B cell (primary cell): ENCODE measurements at regions of chr16 and their contacts with region 1.

Region 1: DNA sequence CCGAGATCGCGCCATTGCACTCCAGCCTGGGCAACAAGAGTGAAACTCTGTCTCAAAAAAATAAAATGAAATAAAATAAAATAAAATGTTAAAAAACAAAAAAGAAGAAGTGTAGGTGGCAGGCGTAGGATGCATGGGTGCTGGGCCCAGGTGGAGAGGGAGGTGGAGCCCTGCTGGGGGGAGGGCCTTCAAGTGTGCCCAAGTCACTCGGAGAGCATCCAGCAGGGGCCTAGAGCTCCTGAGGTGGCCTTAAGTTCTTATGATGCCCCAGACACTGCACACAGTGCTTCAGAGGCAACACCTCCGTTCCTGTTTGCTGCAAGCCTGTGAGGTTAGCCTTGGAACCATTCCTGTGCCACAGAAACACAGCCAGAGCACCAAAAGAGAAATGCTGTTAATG is 23.2 kb downstream of the IL4R start:
- DNase-seq: no peak
- ATAC-seq: peak; percentile 54
- H3K4me3 ChIP-seq: no peak overlapping the region
- H3K4me3 Mint-ChIP-seq: no peak overlapping the region
- H3K27ac ChIP-seq: no peak overlapping the region
- H3K27ac Mint-ChIP-seq: peak overlapping the region; percentile 59
- H3K4me1 ChIP-seq: peaks cover 41 to 49% of the 10 kb centered on the region in 2 donors
- H3K4me1 Mint-ChIP-seq: peaks cover 51% of the 10 kb centered on the region
- H3K27me3 ChIP-seq: no peaks in the 10 kb centered on the region
- H3K27me3 Mint-ChIP-seq: no peaks in the 10 kb centered on the region
- CTCF ChIP-seq: no peak

Region 2: DNA sequence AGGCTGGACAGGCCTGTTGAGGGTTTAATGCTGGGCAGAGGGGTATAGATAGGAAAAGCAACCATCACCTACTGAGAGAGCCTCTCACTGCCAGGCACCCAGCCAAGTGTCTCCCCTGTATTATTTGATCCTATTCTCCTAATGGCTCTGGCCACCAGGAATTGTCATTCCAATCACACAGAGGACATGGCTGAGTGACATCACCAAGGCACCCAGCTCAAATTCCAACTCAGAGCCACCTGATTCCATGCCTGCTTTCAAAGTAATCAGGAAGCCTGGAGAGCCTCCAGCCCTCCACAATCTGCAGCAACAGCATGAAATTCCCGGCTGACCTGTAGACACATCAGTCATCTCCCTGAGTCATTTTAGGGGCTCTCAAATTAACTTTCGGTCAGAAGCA is 639.2 kb before region 1 on chr16:
- CTCF ChIA-PET with region 1: no interaction called
- POLR2A ChIA-PET with region 1: no interaction called
- intact Hi-C with region 1: no loop called
- DNase-seq: no peak
- ATAC-seq: no peak
- H3K4me3 ChIP-seq: no peak overlapping the region
- H3K4me3 Mint-ChIP-seq: no peak overlapping the region
- H3K27ac ChIP-seq: no peak overlapping the region
- H3K27ac Mint-ChIP-seq: no peak overlapping the region
- H3K4me1 ChIP-seq: peaks cover 3 to 5% of the 10 kb centered on the region in 2 donors
- H3K4me1 Mint-ChIP-seq: peaks cover 2% of the 10 kb centered on the region
- H3K27me3 ChIP-seq: peaks cover 0 to 22% (median 14%) of the 10 kb centered on the region in 4 experiments
- H3K27me3 Mint-ChIP-seq: peaks cover 38% of the 10 kb centered on the region
- CTCF ChIP-seq: no peak

Region 3: DNA sequence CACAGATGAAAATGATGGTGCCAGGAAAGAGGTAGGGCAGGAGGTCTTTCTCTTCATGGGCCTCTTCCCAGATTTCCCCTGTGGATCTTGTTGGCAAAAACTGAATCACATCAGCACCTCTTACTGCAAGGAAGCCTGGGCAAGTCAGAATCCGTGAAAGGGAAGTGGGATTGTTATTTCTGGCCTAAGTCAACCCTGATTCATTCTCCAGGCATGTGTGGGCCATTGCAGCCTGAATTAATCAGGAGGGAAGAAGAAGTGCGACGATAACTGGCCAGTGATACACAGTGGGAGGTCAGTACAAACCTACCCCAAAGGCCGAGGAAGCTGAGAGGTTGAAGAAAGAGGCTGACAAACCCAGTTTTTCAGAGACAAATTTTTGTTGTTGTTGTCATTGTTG is 50.6 kb before region 1 on chr16:
- CTCF ChIA-PET with region 1: no interaction called
- POLR2A ChIA-PET with region 1: no interaction called
- intact Hi-C with region 1: no loop called
- DNase-seq: no peak
- ATAC-seq: no peak
- H3K4me3 ChIP-seq: no peak overlapping the region
- H3K4me3 Mint-ChIP-seq: no peak overlapping the region
- H3K27ac ChIP-seq: peak overlapping the region in 1 of 2 donors; percentile 18
- H3K27ac Mint-ChIP-seq: peak overlapping the region; percentile 11
- H3K4me1 ChIP-seq: peaks cover 38% of the 10 kb centered on the region in 2 donors
- H3K4me1 Mint-ChIP-seq: peaks cover 49% of the 10 kb centered on the region
- H3K27me3 ChIP-seq: no peaks in the 10 kb centered on the region
- H3K27me3 Mint-ChIP-seq: no peaks in the 10 kb centered on the region
- CTCF ChIP-seq: no peak

Region 4: DNA sequence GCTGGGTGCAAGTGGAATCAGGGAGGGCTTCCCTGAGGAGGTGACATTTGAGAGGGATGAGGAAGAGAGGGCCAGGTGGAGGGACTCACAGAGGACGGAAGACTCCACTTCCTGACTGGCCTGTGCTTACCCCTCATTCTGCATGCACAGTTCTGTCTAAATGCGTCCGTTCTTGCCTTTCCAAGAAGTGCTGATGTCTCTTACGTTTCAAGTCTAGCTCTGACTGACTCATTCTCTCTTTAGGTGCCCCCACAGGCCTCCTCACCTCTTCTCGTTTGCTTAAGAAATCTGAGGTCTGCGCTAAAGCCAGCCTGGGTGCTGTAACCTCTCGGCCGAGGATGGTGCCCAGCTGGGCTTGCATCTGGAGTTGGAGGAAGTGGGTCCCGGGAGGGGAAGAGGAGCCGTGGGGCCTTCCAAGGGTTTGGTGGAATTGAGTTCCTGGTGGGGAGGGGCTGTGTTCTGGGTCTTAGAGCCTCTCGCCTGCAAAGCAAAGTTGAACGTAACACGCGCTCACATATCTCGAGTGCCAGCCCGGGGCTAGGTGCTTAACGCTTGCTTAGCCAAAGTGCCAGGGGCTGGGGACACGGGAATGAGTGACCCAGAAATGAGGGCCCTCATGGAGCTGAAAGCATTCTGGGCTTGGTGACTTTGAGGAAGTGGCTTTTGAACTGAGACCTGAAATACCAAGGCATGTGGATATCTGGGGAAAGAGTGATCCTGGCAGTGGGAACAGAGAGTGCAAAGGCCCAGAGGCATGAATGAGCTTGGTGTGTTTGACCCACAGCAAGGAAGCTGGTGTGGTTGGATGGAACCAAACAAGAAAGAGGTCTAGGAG is 18.4 kb before region 1 on chr16:
- CTCF ChIA-PET with region 1: interaction called, 4 read pairs
- POLR2A ChIA-PET with region 1: interaction called, 4 read pairs
- intact Hi-C with region 1: loop called (anchors 2 kb)
- DNase-seq: peak; percentile 39
- ATAC-seq: peak; percentile 52
- H3K4me3 ChIP-seq: peak overlapping the region; percentile 40 to 98 (median 93)
- H3K4me3 Mint-ChIP-seq: peak overlapping the region; percentile 98
- H3K27ac ChIP-seq: peak overlapping the region; percentile 28 to 69
- H3K27ac Mint-ChIP-seq: peak overlapping the region; percentile 88
- H3K4me1 ChIP-seq: peaks cover 68 to 84% of the 10 kb centered on the region in 2 donors
- H3K4me1 Mint-ChIP-seq: peaks cover 80% of the 10 kb centered on the region
- H3K27me3 ChIP-seq: no peaks in the 10 kb centered on the region
- H3K27me3 Mint-ChIP-seq: no peaks in the 10 kb centered on the region
- CTCF ChIP-seq: no peak

Region 5: DNA sequence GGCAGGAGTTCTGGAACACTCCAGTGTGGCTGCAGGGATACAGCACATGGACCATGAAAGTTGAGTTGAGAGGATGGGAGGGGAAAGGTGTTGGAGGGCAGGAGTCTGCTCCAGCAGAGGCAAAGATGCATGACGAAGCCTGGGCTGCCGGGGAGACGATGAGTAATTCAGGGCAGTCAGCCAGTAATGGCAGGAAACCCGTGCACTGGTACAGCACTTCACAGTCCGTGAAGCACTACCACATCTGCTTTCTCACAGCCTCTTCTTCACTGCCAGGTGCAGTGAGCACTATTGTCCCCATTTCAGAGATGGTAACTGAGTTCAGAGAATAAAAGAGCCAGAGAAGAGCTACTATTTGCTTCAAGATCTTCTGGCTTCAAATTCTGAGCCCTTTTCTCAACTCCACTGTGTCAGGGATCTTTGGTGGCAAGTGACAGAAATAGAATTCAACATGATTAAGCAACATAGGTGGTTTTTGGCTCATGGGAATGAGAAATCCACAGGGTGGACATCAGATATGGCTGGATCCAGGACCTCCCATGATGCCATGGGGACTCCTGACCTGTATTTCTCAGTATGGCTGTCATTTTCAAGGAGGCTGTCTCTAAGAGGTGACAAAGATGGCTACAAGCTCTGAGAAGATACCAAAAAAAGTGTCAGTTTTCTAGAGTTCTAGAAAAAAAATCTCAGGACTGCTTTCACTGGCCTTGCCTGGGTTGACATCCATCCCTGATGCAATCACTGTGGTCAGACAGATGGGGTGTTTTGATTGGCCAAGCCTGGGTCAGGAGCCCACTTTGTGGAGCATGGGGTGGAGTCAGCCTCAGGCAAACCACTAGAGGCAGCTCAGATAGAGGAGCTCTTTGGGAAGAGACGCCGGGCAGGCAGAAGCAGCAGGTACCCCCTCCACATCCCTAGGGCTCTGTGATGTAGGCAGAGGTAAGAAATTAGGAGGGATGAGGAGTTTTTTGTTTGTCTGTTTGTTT is 89.7 kb after region 1 on chr16:
- CTCF ChIA-PET with region 1: no interaction called
- POLR2A ChIA-PET with region 1: no interaction called
- intact Hi-C with region 1: no loop called
- DNase-seq: peak; percentile 89
- ATAC-seq: peak; percentile 94
- H3K4me3 ChIP-seq: no peak overlapping the region
- H3K4me3 Mint-ChIP-seq: peak overlapping the region; percentile 68
- H3K27ac ChIP-seq: peak overlapping the region; percentile 74 to 83
- H3K27ac Mint-ChIP-seq: peak overlapping the region; percentile 91
- H3K4me1 ChIP-seq: peaks cover 62 to 76% of the 10 kb centered on the region in 2 donors
- H3K4me1 Mint-ChIP-seq: peaks cover 68% of the 10 kb centered on the region
- H3K27me3 ChIP-seq: no peaks in the 10 kb centered on the region
- H3K27me3 Mint-ChIP-seq: peaks cover 4% of the 10 kb centered on the region
- CTCF ChIP-seq: no peak